Activated naive CD4-positive, alpha-beta T cell treated with anti-CD3 and anti-CD28 coated beads, Interleukin-2, amount 10 ng/mL, durations not matched to agents 7 days and 5 days (primary cell): ENCODE measurements at regions of chr13 and their contacts with region 1.

Region 1: GRCh38 chr13:46321494-46322225 is 65.4 kb downstream of the RUBCNL start:
- DNase-seq: peak; percentile 84
- H3K4me3 Mint-ChIP-seq: peak overlapping the region; percentile 48
- H3K27ac Mint-ChIP-seq: peak overlapping the region; percentile 77
- H3K4me1 Mint-ChIP-seq: peaks cover 19% of the 10 kb centered on the region
- H3K27me3 Mint-ChIP-seq: peaks cover 11% of the 10 kb centered on the region

Region 2: GRCh38 chr13:46088821-46089562 is 232.7 kb before region 1 on chr13:
- CTCF ChIA-PET with region 1: no interaction called
- DNase-seq: no peak
- H3K4me3 Mint-ChIP-seq: no peak overlapping the region
- H3K27ac Mint-ChIP-seq: no peak overlapping the region
- H3K4me1 Mint-ChIP-seq: no peaks in the 10 kb centered on the region
- H3K27me3 Mint-ChIP-seq: peaks cover 29% of the 10 kb centered on the region

Region 3: GRCh38 chr13:46126552-46127357 is 194.9 kb before region 1 on chr13:
- CTCF ChIA-PET with region 1: interaction called, 12 read pairs
- DNase-seq: peak; percentile 78
- H3K4me3 Mint-ChIP-seq: no peak overlapping the region
- H3K27ac Mint-ChIP-seq: peak overlapping the region; percentile 25
- H3K4me1 Mint-ChIP-seq: peaks cover 35% of the 10 kb centered on the region
- H3K27me3 Mint-ChIP-seq: peaks cover 7% of the 10 kb centered on the region

Region 4: DNA sequence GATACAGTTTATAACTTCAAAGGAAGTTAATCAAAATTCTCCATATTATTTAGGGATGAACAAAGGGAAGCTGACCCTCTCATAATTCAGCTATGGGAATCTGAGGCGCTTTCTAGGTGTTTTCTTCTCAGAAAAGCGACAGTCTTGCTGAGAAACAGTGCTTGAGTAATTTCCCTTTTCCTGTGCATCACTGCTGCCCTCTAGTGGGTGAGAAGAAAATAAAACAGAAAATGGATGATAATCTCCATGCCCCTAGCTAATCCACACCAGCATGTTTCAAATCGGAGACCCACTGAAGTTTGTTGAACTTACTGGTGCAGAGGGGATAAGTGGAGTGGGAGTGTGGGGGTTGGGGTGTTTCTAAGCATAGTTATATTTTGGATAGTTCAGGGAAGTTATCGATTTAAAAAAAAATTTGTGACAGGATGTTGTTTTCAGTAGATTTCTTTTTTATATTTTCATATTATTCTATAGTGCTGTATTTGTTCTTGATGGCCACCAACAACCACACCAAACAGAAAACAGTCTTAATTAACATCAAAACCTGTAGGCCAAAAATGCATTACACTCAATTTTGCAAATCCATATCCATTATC is 161.1 kb before region 1 on chr13:
- CTCF ChIA-PET with region 1: interaction called, 24 read pairs
- DNase-seq: peak; percentile 39
- H3K4me3 Mint-ChIP-seq: peak overlapping the region; percentile 46
- H3K27ac Mint-ChIP-seq: peak overlapping the region; percentile 82
- H3K4me1 Mint-ChIP-seq: peaks cover 64% of the 10 kb centered on the region
- H3K27me3 Mint-ChIP-seq: no peaks in the 10 kb centered on the region

Region 5: DNA sequence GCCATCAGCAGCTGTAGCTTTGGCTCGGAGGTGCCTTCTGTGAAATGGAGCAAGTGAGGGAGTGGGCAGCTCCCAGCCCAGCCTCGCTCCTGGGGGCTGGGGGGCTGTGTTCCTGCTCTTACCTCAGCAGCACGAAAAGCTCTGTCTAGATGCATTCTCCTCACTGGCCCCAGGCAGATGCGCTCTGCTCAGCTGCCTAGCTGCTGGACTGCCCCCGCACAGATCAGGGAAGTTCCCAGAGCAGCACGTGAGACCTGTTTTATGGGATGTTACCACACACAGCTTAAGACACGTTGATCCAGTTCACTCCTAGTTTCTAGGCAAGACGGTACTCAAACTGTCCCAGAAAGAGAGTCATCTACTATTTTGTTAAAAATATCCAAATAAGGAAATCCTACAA is 153.3 kb before region 1 on chr13:
- CTCF ChIA-PET with region 1: interaction called, 14 read pairs
- DNase-seq: no peak
- H3K4me3 Mint-ChIP-seq: peak overlapping the region; percentile 50
- H3K27ac Mint-ChIP-seq: peak overlapping the region; percentile 96
- H3K4me1 Mint-ChIP-seq: peaks cover 96% of the 10 kb centered on the region
- H3K27me3 Mint-ChIP-seq: no peaks in the 10 kb centered on the region

Region 6: GRCh38 chr13:46278474-46278873 is 43.2 kb before region 1 on chr13:
- CTCF ChIA-PET with region 1: no interaction called
- DNase-seq: no peak
- H3K4me3 Mint-ChIP-seq: no peak overlapping the region
- H3K27ac Mint-ChIP-seq: no peak overlapping the region
- H3K4me1 Mint-ChIP-seq: no peaks in the 10 kb centered on the region
- H3K27me3 Mint-ChIP-seq: peaks cover 3% of the 10 kb centered on the region

Region 7: GRCh38 chr13:46288570-46289259 is 32.9 kb before region 1 on chr13:
- CTCF ChIA-PET with region 1: interaction called, 18 read pairs
- DNase-seq: no peak
- H3K4me3 Mint-ChIP-seq: no peak overlapping the region
- H3K27ac Mint-ChIP-seq: no peak overlapping the region
- H3K4me1 Mint-ChIP-seq: peaks cover 16% of the 10 kb centered on the region
- H3K27me3 Mint-ChIP-seq: peaks cover 3% of the 10 kb centered on the region

Region 8: DNA sequence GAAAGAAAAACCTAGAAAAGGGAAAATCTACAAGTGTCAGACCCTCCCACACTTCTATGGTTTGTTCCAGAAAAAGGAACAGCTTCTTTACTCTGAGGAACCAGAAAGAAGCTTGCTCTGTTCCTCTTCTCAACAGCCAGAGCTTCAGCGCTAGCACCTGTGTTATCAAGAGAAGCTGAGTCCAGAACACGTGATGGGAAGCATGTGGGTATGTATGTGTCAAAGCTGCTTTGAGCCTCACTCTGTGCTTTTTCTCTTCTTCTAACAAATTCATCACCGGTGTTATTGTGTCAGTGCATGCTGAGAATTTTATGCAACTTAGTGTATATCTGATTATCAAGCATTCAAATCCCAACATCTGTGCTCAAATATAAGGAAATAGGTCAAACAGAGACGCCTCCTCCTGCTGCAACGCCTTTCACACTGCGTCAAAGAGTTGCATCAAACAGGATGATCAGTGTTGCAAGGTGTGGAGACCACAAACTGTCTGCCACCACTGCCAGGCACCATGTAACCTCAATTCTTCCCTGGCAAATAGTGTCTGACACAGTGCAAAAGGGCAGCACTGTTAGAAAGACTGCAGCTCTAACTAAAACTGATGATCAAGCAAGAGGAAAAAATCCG is 26.1 kb before region 1 on chr13:
- CTCF ChIA-PET with region 1: interaction called, 18 read pairs
- DNase-seq: peak; percentile 76
- H3K4me3 Mint-ChIP-seq: peak overlapping the region; percentile 55
- H3K27ac Mint-ChIP-seq: peak overlapping the region; percentile 97
- H3K4me1 Mint-ChIP-seq: peaks cover 42% of the 10 kb centered on the region
- H3K27me3 Mint-ChIP-seq: no peaks in the 10 kb centered on the region

Region 9: DNA sequence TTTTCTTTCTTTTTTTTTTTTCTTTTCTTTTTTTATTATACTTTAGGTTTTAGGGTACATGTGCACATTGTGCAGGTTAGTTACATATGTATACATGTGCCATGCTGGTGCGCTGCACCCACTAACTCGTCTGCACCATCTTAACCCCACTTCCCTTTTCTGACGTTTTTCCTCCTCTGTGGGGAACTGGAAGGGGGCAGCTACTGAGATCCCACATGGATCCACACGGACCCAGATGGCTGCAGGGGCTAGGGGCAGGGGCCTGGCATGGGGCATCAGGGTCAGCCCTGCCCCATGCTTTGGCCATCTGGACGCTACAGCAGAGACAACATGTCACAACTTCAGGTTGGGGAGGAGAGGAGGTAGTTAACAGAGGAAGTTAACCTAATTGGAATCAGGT is 11.1 kb after region 1 on chr13:
- CTCF ChIA-PET with region 1: interaction called, 16 read pairs
- DNase-seq: no peak
- H3K4me3 Mint-ChIP-seq: no peak overlapping the region
- H3K27ac Mint-ChIP-seq: no peak overlapping the region
- H3K4me1 Mint-ChIP-seq: peaks cover 26% of the 10 kb centered on the region
- H3K27me3 Mint-ChIP-seq: peaks cover 7% of the 10 kb centered on the region

Region 10: DNA sequence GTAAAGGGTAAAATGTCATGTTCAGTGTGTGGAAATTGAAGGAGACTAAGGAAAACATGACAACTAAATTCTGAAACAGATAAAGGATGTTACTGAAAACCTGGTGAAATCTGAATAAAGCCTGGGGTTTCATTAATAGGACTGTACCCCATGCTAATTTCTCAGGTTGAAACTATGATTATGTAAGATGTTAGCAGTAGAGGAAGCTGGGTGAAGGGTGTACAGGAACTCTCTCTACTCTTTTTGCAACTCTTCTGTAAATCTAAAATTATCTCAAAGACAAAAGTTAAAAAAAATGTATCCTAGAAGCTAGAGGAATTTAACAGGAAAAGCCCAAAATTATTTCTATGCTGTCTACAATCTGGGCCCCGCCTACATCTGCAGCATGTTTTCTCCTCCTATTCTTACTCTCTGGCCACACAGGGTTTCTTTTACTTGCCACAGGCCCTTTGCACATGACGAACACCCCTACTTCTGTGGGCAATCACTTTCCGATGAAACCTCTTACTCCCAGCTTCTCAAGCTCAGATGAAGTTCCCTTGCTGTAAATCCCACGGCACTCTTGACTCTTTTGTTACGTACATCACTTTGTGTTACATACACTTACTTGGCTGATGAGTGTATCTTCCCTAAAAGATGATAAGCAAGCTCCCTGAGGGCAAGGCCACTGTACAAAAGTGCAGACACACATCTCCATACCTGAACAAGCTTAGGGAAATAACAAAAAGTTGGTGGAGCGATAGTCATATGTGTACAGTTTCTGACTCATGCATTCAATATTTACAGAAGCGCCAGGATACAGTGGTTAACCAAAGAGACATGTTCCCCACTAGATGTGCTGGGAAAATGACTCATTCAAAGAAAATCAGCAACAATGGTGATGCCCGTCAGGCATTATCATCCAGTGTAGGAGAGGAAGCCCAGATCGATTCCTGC is 32.8 kb after region 1 on chr13:
- CTCF ChIA-PET with region 1: no interaction called
- DNase-seq: no peak
- H3K4me3 Mint-ChIP-seq: no peak overlapping the region
- H3K27ac Mint-ChIP-seq: no peak overlapping the region
- H3K4me1 Mint-ChIP-seq: peaks cover 8% of the 10 kb centered on the region
- H3K27me3 Mint-ChIP-seq: no peaks in the 10 kb centered on the region